B cell (primary cell): ENCODE measurements at regions of chr6 and their contacts with region 1.

Region 1: DNA sequence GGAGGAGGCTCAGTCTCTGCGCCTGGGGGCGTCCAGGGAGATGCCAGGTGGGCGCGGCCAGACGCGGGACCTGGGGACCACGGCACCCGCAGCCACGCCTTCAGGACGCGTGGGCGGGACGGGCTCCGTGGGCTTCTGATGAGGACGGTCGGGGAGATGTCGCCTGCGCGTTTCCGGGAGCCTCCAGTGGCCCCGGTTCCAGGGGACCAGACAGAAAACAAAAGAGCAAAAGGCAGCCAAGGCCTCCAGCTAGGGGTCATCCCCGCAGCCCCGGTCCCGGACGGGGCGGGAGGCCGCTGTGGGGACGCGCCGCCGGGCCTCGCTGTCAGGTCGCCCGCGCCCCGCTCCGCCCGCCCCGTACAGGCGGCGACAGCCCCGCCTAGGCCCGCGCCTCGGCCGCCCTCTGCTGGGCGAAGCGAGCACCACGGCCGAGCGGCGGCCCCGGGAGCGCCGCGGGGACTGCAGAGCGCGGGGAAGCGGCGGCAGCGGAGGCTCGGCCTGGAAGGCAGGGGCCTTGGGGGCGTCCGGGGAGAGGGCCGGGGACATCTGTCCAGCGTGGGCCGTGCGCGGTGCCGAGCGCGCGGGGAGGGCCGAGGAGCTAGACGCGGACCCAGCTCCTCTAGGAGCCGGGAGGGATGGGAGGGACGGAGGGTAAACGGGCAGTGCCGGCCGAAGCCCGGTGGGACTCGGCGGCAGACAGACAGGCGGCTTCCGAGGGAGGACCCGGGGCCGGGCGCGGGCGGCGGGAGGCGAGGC is 48.7 kb downstream of the TMEM242 start:
- DNase-seq: peak; percentile 95
- ATAC-seq: peak; percentile 81
- H3K4me3 ChIP-seq: peak overlapping the region in 4 of 5 experiments; percentile 63 to 79 (median 66)
- H3K4me3 Mint-ChIP-seq: peak overlapping the region; percentile 96
- H3K27ac ChIP-seq: peak overlapping the region; percentile 81 to 92
- H3K27ac Mint-ChIP-seq: peak overlapping the region; percentile 98
- H3K4me1 ChIP-seq: peaks cover 9 to 17% of the 10 kb centered on the region in 2 donors
- H3K4me1 Mint-ChIP-seq: peaks cover 14% of the 10 kb centered on the region
- H3K27me3 ChIP-seq: no peaks in the 10 kb centered on the region
- H3K27me3 Mint-ChIP-seq: no peaks in the 10 kb centered on the region
- CTCF ChIP-seq: peak; percentile 89

Region 2: DNA sequence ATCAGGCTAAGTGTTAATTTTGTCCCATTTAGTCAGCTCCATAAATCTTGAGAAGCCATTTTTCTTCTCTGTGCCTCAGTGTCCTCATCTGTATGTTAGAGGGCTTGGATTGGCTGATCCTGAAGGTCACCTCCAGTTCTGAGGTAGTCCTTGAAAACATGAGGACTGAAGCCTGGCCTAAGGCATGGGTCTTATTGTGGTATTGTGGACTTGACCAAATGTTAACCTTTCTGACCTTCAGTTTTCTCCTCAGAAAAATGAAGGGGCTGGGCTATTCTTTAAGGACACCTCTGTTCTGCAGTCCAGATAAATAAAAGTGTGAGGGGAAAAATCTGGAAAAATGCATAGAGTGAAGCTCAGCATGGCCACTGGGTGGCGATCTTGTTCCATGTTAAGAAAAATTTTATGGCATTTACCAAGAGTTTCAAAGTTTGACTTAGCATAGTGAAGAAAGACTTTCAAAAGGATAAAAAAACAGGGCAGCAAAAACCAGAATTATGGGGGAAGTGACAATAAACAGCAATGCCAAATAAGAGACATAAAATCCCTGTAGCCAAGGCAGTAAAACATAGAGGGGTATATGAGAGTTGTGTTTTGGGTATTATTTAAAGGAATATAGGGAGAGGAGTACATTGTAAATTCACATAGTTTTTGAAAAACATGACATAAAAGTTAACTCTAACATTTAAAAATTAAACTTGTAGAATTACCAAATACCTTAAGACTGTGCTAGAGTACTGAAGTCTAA is 1947.1 kb before region 1 on chr6:
- CTCF ChIA-PET with region 1: no interaction called
- POLR2A ChIA-PET with region 1: no interaction called
- intact Hi-C with region 1: loop called (anchors 2 kb)
- DNase-seq: peak; percentile 75
- ATAC-seq: peak; percentile 39
- H3K4me3 ChIP-seq: no peak overlapping the region
- H3K4me3 Mint-ChIP-seq: no peak overlapping the region
- H3K27ac ChIP-seq: no peak overlapping the region
- H3K27ac Mint-ChIP-seq: no peak overlapping the region
- H3K4me1 ChIP-seq: no peaks in the 10 kb centered on the region
- H3K4me1 Mint-ChIP-seq: peaks cover 3% of the 10 kb centered on the region
- H3K27me3 ChIP-seq: no peaks in the 10 kb centered on the region
- H3K27me3 Mint-ChIP-seq: no peaks in the 10 kb centered on the region
- CTCF ChIP-seq: peak; percentile 94

Region 3: DNA sequence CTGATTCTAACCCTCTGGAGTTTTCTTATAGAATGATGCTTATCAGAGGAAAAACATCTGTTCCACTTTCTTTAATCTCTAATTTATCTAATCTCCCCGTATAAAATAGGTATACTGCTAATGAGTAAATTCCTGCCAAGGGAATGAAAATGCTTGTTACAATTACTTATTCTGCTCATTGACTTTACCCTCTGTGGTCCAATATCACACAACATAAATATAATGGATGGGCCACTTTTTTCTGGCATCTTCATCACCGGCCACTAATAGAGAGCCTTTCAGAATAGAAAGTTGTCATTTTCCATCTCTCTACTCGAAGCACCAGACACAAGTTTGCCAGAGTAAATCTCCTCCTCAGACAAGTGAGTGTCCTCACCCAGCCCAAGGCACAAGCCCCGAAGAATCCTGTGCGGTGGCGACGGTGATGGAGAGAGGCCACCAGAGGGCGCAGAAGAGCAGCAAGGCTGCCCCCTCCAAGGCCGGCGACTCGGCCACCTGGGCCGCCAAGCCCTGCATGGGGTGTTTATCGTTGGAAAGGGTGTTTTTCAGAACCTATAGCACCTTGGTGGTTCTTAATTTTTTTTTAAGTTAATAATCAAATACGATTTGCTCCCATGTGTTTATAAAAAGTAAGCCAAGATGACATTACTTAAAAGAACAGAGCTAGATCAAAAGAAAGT is 710.4 kb before region 1 on chr6:
- CTCF ChIA-PET with region 1: no interaction called
- POLR2A ChIA-PET with region 1: no interaction called
- intact Hi-C with region 1: loop called (anchors 1 kb)
- DNase-seq: peak; percentile 86
- ATAC-seq: peak; percentile 100
- H3K4me3 ChIP-seq: no peak overlapping the region
- H3K4me3 Mint-ChIP-seq: no peak overlapping the region
- H3K27ac ChIP-seq: no peak overlapping the region
- H3K27ac Mint-ChIP-seq: no peak overlapping the region
- H3K4me1 ChIP-seq: peaks cover 2 to 12% of the 10 kb centered on the region in 2 donors
- H3K4me1 Mint-ChIP-seq: peaks cover 16% of the 10 kb centered on the region
- H3K27me3 ChIP-seq: no peaks in the 10 kb centered on the region
- H3K27me3 Mint-ChIP-seq: peaks cover 18% of the 10 kb centered on the region
- CTCF ChIP-seq: peak; percentile 98

Region 4: GRCh38 chr6:156776840-156777576 is 497.6 kb before region 1 on chr6 and contains the start of gene ARID1B:
- CTCF ChIA-PET with region 1: no interaction called
- POLR2A ChIA-PET with region 1: no interaction called
- intact Hi-C with region 1: loop called (anchors 5 kb)
- DNase-seq: peak; percentile 93
- ATAC-seq: peak; percentile 65
- H3K4me3 ChIP-seq: peak within 1 kb of the TSS; percentile 70 to 92 (median 81)
- H3K4me3 Mint-ChIP-seq: peak within 1 kb of the TSS; percentile 94
- H3K27ac ChIP-seq: peak within 1 kb of the TSS; percentile 92 to 94
- H3K27ac Mint-ChIP-seq: peak within 1 kb of the TSS; percentile 98
- H3K4me1 ChIP-seq: peaks cover 12 to 26% of the 10 kb centered on the region in 2 donors
- H3K4me1 Mint-ChIP-seq: peaks cover 42% of the 10 kb centered on the region
- H3K27me3 ChIP-seq: no peaks in the 10 kb centered on the region
- H3K27me3 Mint-ChIP-seq: no peaks in the 10 kb centered on the region
- CTCF ChIP-seq: no peak
- total RNA-seq, gene ARID1B: 280 and 297 TPM in 2 replicates

Region 5: DNA sequence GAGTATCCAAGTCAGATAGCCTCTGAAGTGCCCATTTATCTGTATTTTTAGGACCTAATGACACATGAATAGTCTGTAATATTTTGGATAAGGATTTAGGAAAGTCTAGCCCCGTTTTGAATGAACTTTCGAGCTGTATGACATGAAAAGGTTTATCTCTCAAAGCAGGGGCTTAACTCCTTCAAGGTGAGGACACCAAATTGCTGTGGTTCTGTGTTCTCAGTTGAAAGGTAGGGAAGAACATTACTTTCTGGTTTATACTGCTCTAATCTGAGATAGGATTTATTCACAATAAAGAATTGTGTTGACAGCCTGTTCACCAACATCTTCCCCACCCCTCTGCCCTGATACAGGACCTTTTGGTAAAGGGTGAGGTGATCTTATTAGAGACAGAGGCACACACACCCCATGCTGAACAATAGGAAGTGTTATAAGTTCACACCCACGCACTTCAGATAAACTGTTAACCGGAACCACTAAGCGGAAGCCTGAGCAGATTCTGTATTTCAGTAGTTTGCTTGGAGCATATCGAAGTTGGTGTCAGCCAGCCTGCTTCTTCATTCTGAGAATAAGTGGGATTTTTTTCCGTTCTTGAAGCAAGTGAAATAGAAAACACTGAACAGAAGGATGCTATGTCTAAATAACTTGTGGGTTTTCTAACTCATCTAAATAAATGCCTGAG is 174.6 kb before region 1 on chr6:
- CTCF ChIA-PET with region 1: no interaction called
- POLR2A ChIA-PET with region 1: no interaction called
- intact Hi-C with region 1: loop called (anchors 1 kb)
- DNase-seq: peak; percentile 76
- ATAC-seq: peak; percentile 95
- H3K4me3 ChIP-seq: peak overlapping the region in 1 of 5 experiments; percentile 13
- H3K4me3 Mint-ChIP-seq: peak overlapping the region; percentile 70
- H3K27ac ChIP-seq: peak overlapping the region; percentile 40 to 76
- H3K27ac Mint-ChIP-seq: peak overlapping the region; percentile 87
- H3K4me1 ChIP-seq: peaks cover 33 to 35% of the 10 kb centered on the region in 2 donors
- H3K4me1 Mint-ChIP-seq: peaks cover 54% of the 10 kb centered on the region
- H3K27me3 ChIP-seq: no peaks in the 10 kb centered on the region
- H3K27me3 Mint-ChIP-seq: no peaks in the 10 kb centered on the region
- CTCF ChIP-seq: no peak

Region 6: DNA sequence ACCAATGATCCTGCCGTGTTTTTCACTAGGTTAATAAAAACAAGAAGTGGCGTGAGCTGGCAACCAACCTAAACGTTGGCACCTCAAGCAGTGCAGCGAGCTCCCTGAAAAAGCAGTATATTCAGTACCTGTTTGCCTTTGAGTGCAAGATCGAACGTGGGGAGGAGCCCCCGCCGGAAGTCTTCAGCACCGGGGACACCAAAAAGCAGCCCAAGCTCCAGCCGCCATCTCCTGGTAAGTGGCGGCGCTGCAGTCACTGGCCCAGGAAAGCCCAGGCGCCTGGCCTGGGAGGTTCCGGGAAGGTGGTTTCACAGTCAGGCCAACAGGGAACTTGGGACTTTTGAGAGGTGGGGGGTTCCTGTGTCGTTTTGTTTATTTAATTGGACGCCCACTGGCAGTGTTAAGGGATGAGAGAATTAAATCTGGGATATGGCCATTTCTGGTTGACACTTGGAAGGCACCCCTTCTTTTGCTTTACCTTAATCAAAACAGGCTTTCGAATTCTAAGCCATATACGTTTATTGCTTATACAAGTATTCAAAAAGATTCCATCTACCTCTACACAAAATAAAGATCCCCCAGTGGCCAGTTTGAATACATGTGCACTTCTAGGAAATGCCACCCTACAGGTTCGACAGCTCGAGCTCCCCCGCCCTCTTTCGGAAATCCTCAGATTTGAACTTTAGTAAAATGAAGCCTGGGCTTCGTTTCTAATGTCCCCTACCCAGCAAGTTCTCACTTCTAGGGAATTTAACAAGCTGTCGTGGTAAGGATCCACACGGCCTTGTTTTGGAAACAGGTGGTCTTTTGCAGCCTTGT is 90.2 kb before region 1 on chr6:
- CTCF ChIA-PET with region 1: no interaction called
- POLR2A ChIA-PET with region 1: no interaction called
- intact Hi-C with region 1: no loop called
- DNase-seq: peak; percentile 51
- ATAC-seq: no peak
- H3K4me3 ChIP-seq: no peak overlapping the region
- H3K4me3 Mint-ChIP-seq: no peak overlapping the region
- H3K27ac ChIP-seq: no peak overlapping the region
- H3K27ac Mint-ChIP-seq: no peak overlapping the region
- H3K4me1 ChIP-seq: no peaks in the 10 kb centered on the region
- H3K4me1 Mint-ChIP-seq: peaks cover 2% of the 10 kb centered on the region
- H3K27me3 ChIP-seq: no peaks in the 10 kb centered on the region
- H3K27me3 Mint-ChIP-seq: no peaks in the 10 kb centered on the region
- CTCF ChIP-seq: peak; percentile 76

Region 7: GRCh38 chr6:157235600-157236039 is 39.0 kb before region 1 on chr6:
- CTCF ChIA-PET with region 1: interaction called, 5 read pairs
- POLR2A ChIA-PET with region 1: no interaction called
- intact Hi-C with region 1: loop called (anchors 1 kb)
- DNase-seq: peak; percentile 66
- ATAC-seq: peak; percentile 63
- H3K4me3 ChIP-seq: peak overlapping the region; percentile 2 to 69 (median 59)
- H3K4me3 Mint-ChIP-seq: peak overlapping the region; percentile 97
- H3K27ac ChIP-seq: no peak overlapping the region
- H3K27ac Mint-ChIP-seq: peak overlapping the region; percentile 77
- H3K4me1 ChIP-seq: peaks cover 18 to 20% of the 10 kb centered on the region in 2 donors
- H3K4me1 Mint-ChIP-seq: peaks cover 22% of the 10 kb centered on the region
- H3K27me3 ChIP-seq: peaks cover 0 to 60% (median 28%) of the 10 kb centered on the region in 4 experiments
- H3K27me3 Mint-ChIP-seq: peaks cover 66% of the 10 kb centered on the region
- CTCF ChIP-seq: peak; percentile 70

Region 8: GRCh38 chr6:157284738-157285421 is 10.2 kb after region 1 on chr6:
- CTCF ChIA-PET with region 1: no interaction called
- POLR2A ChIA-PET with region 1: no interaction called
- intact Hi-C with region 1: no loop called
- DNase-seq: no peak
- ATAC-seq: no peak
- H3K4me3 ChIP-seq: no peak overlapping the region
- H3K4me3 Mint-ChIP-seq: no peak overlapping the region
- H3K27ac ChIP-seq: no peak overlapping the region
- H3K27ac Mint-ChIP-seq: no peak overlapping the region
- H3K4me1 ChIP-seq: no peaks in the 10 kb centered on the region
- H3K4me1 Mint-ChIP-seq: peaks cover 2% of the 10 kb centered on the region
- H3K27me3 ChIP-seq: no peaks in the 10 kb centered on the region
- H3K27me3 Mint-ChIP-seq: no peaks in the 10 kb centered on the region
- CTCF ChIP-seq: no peak

Region 9: DNA sequence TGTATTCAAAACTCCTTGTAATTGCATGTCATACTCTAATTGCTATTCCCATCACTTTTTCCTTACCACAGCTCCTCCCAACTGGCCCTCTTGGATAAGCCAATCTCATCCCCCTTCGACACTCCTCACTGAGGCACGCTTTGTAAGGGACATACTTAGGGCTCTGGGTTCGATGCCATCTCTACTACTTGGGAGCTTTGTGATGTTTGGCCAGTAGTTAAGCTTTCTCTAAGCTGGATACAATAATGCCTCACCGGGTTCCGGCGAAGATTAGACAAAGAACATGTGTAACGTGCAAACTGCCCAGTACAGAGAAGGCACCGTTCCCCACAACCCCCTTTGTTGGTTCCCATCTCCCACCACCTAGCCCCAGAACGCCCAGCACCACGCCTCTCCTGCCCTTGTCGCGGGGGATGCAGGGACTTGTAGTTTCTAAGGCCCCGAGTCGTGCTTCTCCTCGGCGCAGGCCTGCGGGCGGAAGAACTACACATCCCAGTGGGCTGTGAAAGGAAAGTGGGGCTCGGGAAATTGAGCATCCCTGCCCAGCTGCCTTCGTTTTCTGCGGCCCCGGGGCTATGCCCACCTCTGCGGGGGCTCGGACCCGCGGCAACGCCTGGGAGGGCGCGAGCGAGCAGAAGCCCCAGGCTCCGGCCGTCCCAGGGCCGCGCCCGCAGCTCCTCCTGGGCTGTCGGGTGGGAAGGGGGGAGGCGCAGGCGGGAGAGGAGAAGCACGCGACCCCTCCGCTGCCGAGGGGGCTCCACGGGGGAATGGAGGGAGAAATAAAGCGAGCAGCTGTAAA is 105.2 kb after region 1 on chr6:
- CTCF ChIA-PET with region 1: no interaction called
- POLR2A ChIA-PET with region 1: no interaction called
- intact Hi-C with region 1: loop called (anchors 1 kb)
- DNase-seq: peak; percentile 90
- ATAC-seq: peak; percentile 74
- H3K4me3 ChIP-seq: peak overlapping the region; percentile 42 to 99 (median 93)
- H3K4me3 Mint-ChIP-seq: peak overlapping the region; percentile 80
- H3K27ac ChIP-seq: peak overlapping the region; percentile 55 to 80
- H3K27ac Mint-ChIP-seq: peak overlapping the region; percentile 69
- H3K4me1 ChIP-seq: peaks cover 24 to 32% of the 10 kb centered on the region in 2 donors
- H3K4me1 Mint-ChIP-seq: peaks cover 26% of the 10 kb centered on the region
- H3K27me3 ChIP-seq: peaks cover 0 to 12% (median 5%) of the 10 kb centered on the region in 4 experiments
- H3K27me3 Mint-ChIP-seq: peaks cover 8% of the 10 kb centered on the region
- CTCF ChIP-seq: no peak